Astrocyte of the cerebellum (primary cell): ENCODE measurements at regions of chr19 and their contacts with region 1.

Region 1: GRCh38 chr19:5607318-5608270 is 15.0 kb downstream of the SAFB2 start:
- DNase-seq: no peak
- H3K4me3 ChIP-seq: no peak overlapping the region
- CTCF ChIP-seq: no peak

Region 2: GRCh38 chr19:5651361-5651760 is 43.8 kb after region 1 on chr19:
- in situ Hi-C with region 1: loop called (anchors 10 kb)
- DNase-seq: no peak
- H3K4me3 ChIP-seq: no peak overlapping the region
- CTCF ChIP-seq: peak; percentile 8

Region 3: DNA sequence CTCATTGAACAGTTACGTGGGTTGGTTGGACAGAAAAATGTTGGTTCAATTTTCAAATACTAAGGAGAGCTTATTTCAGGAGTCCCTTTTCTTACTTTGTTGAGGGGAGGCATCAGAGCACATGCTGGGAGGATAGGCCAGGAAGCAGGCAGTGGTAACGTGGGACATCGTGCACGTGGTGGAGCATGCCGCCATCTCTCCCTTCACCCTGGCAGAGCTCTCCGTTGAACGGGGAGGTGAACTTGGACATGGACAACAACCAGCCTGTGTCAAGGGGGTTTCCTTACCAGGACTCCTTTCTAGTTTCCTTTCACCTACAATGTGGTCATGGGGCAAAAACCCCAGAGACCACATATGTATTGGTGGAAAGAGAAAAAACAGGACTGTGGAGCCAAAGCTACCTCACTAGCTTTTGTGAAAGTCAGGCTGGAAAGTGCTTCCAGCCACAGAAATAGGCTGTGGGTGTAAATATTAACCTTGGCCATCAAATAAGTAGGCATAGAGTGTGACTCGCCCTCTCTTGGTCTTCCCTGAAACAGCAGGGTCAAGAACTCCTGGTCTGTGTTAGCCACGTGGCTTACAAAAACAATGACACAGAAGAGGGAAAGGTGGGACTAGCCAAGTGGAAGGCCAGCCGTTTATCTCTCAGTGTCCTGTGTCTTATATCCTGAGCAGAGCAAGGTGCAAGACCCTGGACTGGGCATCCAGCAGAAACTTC is 58.4 kb after region 1 on chr19:
- in situ Hi-C with region 1: no loop called
- DNase-seq: peak; percentile 19
- H3K4me3 ChIP-seq: no peak overlapping the region
- CTCF ChIP-seq: peak; percentile 27